ENCODE measurements at regions of chr6 and their contacts with region 1.

Region 1: DNA sequence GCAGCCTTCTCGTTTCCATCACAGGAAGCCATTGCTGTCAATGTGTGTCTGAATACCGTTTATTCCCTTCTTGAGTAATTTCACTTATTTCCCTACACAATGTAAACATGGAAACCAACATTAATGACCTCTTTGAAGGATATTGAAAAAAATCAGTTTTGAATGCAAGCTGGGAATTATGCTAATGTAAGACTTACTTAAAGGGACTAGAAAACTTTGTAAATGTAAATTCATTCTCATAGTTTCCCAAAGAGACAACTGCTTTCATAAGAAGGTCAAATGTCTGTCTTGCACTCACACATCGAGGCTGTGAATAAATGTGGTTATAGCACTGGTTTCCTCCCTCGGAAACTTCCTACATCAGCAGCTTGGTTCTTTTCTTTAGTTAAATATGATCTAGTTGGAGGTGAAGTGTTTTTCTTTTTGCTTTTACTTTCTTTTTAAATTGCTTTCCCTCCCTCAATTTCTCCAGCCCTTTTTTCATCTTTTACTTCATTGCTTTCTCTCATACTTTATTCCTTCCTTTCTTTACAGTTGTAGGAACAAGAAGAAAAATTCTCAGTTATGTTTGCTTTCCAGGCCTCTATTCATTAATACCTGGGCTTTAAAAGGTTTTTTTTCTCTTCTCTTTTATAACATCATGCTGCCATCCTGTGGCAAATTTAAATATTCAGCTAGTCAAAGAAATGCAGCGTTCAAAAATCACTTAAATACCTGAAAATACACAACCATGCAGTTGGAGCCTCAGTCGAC is 108.3 kb downstream of the TNFAIP3 start:
- DNase-seq: peak; percentile 7
- ATAC-seq: no peak
- H3K4me3 ChIP-seq: no peak overlapping the region
- H3K27ac ChIP-seq: no peak overlapping the region
- H3K4me1 ChIP-seq: peaks cover 7 to 21% of the 10 kb centered on the region in 2 experiments
- H3K27me3 ChIP-seq: no peaks in the 10 kb centered on the region
- CTCF ChIP-seq: peak in 2 of 3 experiments; percentile 45 to 62; a peak in 3 of 6 replicates
- POLR2A ChIP-seq: no peak
- RAD21 ChIP-seq: peak; percentile 71

Region 2: GRCh38 chr6:137094411-137095008 is 880.9 kb before region 1 on chr6:
- CTCF ChIA-PET with region 1: no interaction called
- POLR2A ChIA-PET with region 1: no interaction called
- RAD21 ChIA-PET with region 1: no interaction called
- intact Hi-C with region 1: loop called (anchors 10 kb)
- DNase-seq: peak; percentile 56
- ATAC-seq: peak; percentile 88
- H3K4me3 ChIP-seq: no peak overlapping the region
- H3K27ac ChIP-seq: no peak overlapping the region
- H3K4me1 ChIP-seq: peaks cover 0 to 3% of the 10 kb centered on the region in 2 experiments; a peak in 2 of 4 replicates
- H3K27me3 ChIP-seq: no peaks in the 10 kb centered on the region
- CTCF ChIP-seq: peak; percentile 62 to 87 (median 84)
- POLR2A ChIP-seq: no peak
- RAD21 ChIP-seq: peak; percentile 87

Region 3: DNA sequence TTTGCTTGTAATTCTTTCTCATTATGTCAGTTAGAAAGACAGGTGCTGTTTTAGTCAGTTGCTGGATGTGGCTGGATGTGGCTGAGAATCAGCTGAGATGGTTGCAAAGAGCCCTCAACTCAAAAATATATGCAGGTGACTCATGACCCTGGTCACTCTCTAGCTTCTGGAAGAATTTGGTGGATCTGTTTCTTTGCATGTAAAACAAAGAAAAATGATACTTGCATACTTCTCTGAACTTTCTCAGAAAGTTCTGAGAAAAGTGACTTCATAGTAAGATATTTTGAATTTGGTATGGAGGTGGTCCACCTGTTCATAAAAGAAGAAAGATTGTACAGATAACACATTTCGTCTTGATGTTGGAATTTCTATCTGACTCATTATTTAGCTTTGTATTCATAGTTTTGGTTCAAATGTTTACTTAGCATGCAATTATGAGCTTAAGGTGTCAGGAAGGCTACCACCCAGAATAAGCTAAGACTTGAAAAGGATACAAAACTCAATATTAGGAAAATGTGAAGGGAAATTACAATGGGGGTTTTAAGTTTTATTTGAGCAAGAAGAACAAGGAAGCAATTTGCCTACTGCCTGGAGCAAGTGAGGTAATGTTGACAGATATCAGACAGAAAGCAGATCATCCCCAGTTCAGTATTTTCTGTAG is 317.9 kb before region 1 on chr6:
- CTCF ChIA-PET with region 1: no interaction called
- POLR2A ChIA-PET with region 1: no interaction called
- RAD21 ChIA-PET with region 1: no interaction called
- intact Hi-C with region 1: no loop called
- DNase-seq: no peak
- ATAC-seq: no peak
- H3K4me3 ChIP-seq: no peak overlapping the region
- H3K27ac ChIP-seq: no peak overlapping the region
- H3K4me1 ChIP-seq: no peaks in the 10 kb centered on the region
- H3K27me3 ChIP-seq: no peaks in the 10 kb centered on the region
- CTCF ChIP-seq: no peak
- POLR2A ChIP-seq: no peak
- RAD21 ChIP-seq: no peak

Region 4: DNA sequence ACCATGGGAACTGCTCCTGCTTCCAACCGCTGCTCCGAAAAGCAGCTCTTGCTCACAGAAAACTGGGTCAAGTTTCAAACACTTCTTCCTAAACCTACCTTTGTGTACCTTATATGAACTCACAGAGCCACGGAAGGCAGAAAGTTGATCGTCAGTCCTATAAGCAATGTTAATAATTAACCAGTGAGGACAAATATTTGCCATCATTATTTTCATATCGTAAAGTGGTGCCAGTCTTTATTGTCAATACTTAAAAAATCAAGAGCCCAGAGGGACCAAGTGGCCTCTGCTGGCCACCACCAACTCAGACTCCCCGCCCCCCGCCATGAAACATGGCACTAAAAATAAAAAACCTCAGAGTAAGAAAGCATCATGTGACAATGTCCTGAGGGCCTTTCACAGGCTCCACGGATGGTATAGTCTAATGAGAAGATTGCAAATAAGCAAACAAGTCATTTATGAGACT is 252.0 kb after region 1 on chr6:
- CTCF ChIA-PET with region 1: no interaction called
- POLR2A ChIA-PET with region 1: no interaction called
- RAD21 ChIA-PET with region 1: no interaction called
- intact Hi-C with region 1: no loop called
- DNase-seq: no peak
- ATAC-seq: no peak
- H3K4me3 ChIP-seq: no peak overlapping the region
- H3K27ac ChIP-seq: no peak overlapping the region
- H3K4me1 ChIP-seq: no peaks in the 10 kb centered on the region
- H3K27me3 ChIP-seq: no peaks in the 10 kb centered on the region
- CTCF ChIP-seq: no peak
- POLR2A ChIP-seq: no peak
- RAD21 ChIP-seq: no peak

Measured in HCT116 (cell line).